Left ventricle myocardium superior (tissue), 1 donor: ENCODE measurements at regions of chr20 and their contacts with region 1.

Region 1: GRCh38 chr20:51595058-51595532 is 52.6 kb upstream of the NFATC2 start:
- DNase-seq: peak; percentile 90
- ATAC-seq: peak; percentile 99

Region 2: GRCh38 chr20:51372176-51372803 is 222.8 kb before region 1 on chr20:
- intact Hi-C with region 1: loop called (anchors 5 kb)
- DNase-seq: peak; percentile 76
- ATAC-seq: peak; percentile 95

Region 3: GRCh38 chr20:51507216-51508036 is 87.7 kb before region 1 on chr20:
- intact Hi-C with region 1: no loop called
- DNase-seq: no peak
- ATAC-seq: no peak